Activated T-helper 2 cell treated with anti-CD3 and anti-CD28 coated beads, Interferon-gamma antibody, Interleukin-2, Interleukin-4, amounts not matched to agents 10 μg/mL and 5 μg/mL and 100 μg/mL, durations not matched to agents 14 hours and 24 hours and 36 hours (primary cell): ENCODE measurements at regions of chr3 and their contacts with region 1.

Region 1: DNA sequence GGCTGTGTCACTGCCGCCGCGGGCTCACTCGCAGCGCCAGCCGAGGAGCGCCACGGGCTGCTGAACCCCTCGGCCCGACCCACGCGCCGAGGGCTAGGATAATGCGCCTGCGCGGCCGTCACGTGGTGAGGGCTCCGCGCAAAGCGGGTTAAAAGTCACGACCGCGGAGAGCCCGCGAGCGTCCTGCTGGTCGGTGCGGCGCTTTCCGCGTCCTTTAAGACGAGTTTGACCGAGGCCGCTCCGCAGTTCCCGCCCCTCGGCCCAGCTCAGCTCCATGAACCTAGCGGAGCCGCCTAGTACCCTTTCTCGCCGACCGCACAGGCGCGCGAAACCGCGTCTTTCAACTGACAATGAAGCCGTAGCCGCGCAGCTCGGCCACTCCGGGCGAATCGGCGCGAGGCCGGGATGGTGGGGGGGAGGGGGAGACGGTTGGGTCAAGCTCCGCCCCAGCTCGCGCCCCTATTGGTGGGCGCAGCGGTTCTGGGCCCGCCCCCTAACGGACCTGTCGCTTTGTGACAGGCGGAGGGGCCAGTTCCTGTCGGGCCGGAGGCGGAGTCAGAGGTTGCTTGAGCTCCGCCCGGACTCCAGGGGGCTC is 636 bp upstream of the STT3B start:
- DNase-seq: peak; percentile 98
- H3K4me3 Mint-ChIP-seq: peak overlapping the region; percentile 82
- H3K27ac Mint-ChIP-seq: peak overlapping the region; percentile 98
- H3K4me1 Mint-ChIP-seq: peaks cover 16% of the 10 kb centered on the region
- H3K27me3 Mint-ChIP-seq: peaks cover 5% of the 10 kb centered on the region

Region 2: DNA sequence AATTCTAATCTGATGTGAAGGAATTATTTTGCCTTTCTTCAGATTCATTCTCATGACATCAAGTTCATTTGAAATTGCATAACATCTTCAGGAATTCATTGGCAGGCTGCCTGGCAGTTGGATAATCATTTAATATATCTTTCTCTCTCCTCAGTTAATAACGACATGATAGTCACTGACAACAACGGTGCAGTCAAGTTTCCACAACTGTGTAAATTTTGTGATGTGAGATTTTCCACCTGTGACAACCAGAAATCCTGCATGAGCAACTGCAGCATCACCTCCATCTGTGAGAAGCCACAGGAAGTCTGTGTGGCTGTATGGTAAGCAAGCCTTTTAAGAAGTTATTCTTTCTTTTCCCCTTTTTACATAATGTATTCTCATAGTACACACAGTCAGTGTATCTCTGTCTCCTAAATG is 887.5 kb before region 1 on chr3:
- intact Hi-C with region 1: loop called (anchors 5 kb)
- DNase-seq: no peak
- H3K4me3 Mint-ChIP-seq: peak overlapping the region; percentile 64
- H3K27ac Mint-ChIP-seq: peak overlapping the region; percentile 95
- H3K4me1 Mint-ChIP-seq: peaks cover 88% of the 10 kb centered on the region
- H3K27me3 Mint-ChIP-seq: no peaks in the 10 kb centered on the region

Region 3: DNA sequence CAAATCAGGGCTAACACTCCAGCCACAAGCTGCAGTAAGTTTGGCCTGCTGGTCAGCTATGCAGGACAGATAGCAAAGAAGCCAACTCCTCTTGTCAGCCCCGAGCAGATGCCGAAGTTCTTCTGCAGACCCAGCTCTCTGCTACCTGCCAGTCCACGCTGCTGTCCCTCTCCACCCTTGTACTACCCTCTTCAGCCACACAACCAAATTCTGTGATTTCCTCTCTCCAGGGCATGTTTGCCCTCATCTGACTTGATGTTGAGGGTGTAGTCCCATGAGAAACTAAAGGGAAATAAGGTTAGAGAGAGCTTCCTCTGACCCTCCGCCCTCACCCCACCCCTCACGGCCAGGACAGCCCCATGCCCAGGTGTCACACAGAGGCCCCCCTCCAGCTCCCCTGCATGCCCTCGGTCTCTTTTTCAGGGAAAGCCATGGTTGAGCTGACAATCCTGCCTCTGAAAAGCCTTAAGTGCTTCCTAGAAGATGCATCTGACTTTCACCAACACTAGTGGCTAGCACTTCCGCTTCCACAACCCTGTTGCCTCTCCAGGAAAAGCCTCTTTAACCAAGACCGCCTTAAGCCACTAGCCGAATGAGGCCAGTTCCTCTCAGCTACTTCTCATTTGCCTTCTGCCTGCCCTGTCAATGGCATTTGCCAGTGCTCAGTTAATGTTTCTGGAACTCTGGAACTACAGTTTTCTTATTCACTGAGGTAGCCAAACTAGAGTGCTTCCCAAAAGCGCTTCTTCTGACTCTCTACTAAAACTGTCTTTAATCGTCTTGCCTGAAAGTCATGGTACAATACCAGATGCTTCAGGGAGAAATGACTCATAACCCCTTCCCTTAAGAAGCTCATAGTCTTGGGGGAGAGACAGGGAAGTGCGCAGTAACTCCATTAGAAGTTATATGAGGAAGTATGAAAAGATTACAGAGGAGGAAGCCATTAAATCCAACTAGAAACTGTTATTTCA is 299.7 kb before region 1 on chr3:
- intact Hi-C with region 1: loop called (anchors 5 kb)
- DNase-seq: no peak
- H3K4me3 Mint-ChIP-seq: no peak overlapping the region
- H3K27ac Mint-ChIP-seq: no peak overlapping the region
- H3K4me1 Mint-ChIP-seq: peaks cover 53% of the 10 kb centered on the region
- H3K27me3 Mint-ChIP-seq: peaks cover 8% of the 10 kb centered on the region

Region 4: GRCh38 chr3:31515486-31516284 is 16.4 kb before region 1 on chr3:
- intact Hi-C with region 1: no loop called
- DNase-seq: no peak
- H3K4me3 Mint-ChIP-seq: no peak overlapping the region
- H3K27ac Mint-ChIP-seq: no peak overlapping the region
- H3K4me1 Mint-ChIP-seq: no peaks in the 10 kb centered on the region
- H3K27me3 Mint-ChIP-seq: peaks cover 9% of the 10 kb centered on the region

Region 5: GRCh38 chr3:31634481-31634880 is 102.4 kb after region 1 on chr3:
- intact Hi-C with region 1: loop called (anchors 5 kb)
- DNase-seq: no peak
- H3K4me3 Mint-ChIP-seq: no peak overlapping the region
- H3K27ac Mint-ChIP-seq: peak overlapping the region; percentile 38
- H3K4me1 Mint-ChIP-seq: peaks cover 36% of the 10 kb centered on the region
- H3K27me3 Mint-ChIP-seq: no peaks in the 10 kb centered on the region

Region 6: GRCh38 chr3:31839144-31839917 is 307.2 kb after region 1 on chr3:
- intact Hi-C with region 1: no loop called
- DNase-seq: no peak
- H3K4me3 Mint-ChIP-seq: no peak overlapping the region
- H3K27ac Mint-ChIP-seq: no peak overlapping the region
- H3K4me1 Mint-ChIP-seq: no peaks in the 10 kb centered on the region
- H3K27me3 Mint-ChIP-seq: peaks cover 3% of the 10 kb centered on the region

Region 7: GRCh38 chr3:31925271-31925630 is 393.2 kb after region 1 on chr3:
- intact Hi-C with region 1: loop called (anchors 5 kb)
- DNase-seq: no peak
- H3K4me3 Mint-ChIP-seq: no peak overlapping the region
- H3K27ac Mint-ChIP-seq: peak overlapping the region; percentile 65
- H3K4me1 Mint-ChIP-seq: peaks cover 38% of the 10 kb centered on the region
- H3K27me3 Mint-ChIP-seq: no peaks in the 10 kb centered on the region

Region 8: DNA sequence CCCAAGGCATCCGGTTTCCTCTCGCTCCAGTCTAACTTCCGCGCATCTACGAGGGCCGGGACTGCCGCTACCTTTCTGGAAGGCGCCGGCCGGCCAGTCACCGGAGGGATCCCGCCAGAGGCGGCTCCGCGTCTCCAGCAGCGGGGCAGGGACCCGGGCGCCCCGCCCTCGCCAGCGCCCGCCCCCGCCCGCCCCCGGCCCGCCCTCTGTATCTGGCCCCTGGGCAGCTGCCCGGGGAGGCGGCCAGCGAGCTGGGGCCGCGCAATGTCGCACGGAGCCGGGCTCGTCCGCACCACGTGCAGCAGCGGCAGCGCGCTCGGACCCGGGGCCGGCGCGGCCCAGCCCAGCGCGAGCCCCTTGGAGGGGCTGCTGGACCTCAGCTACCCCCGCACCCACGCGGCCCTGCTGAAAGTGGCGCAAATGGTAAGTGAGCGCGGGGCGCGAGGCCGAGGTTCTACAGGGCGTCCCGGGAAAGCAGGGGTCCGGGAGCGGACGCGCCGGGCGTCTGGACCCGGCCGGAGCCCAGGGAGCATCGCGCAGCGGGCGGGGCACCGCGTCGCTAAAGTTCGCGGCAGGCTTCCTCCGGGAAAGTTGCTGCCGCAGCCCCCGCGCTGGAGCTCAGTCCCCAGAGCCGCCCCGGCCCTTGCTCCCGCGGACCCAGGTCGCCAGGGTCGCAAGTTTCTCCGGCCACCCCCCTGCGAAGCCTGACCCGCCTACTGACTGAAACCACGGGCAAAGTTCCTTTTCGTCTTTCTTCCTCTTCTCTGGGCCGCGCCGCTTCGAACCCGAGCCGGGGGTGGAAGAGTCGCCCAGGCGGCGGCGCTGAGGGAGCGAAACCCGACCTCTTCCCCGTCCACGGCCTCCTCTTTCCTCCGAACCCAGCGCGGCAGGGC is 859.8 kb after region 1 on chr3 and contains the start of gene CMTM7:
- intact Hi-C with region 1: loop called (anchors 10 kb)
- DNase-seq: peak; percentile 60
- H3K4me3 Mint-ChIP-seq: peak within 1 kb of the TSS; percentile 97
- H3K27ac Mint-ChIP-seq: peak within 1 kb of the TSS; percentile 97
- H3K4me1 Mint-ChIP-seq: peaks cover 45% of the 10 kb centered on the region
- H3K27me3 Mint-ChIP-seq: no peaks in the 10 kb centered on the region
- total RNA-seq, gene CMTM7: 60.0 and 60.9 TPM in 2 replicates